Naive thymus-derived CD4-positive, alpha-beta T cell (primary cell): ENCODE measurements at regions of chr17 and their contacts with region 1.

Region 1: GRCh38 chr17:40317880-40318829 is 9.2 kb downstream of the RARA start:
- DNase-seq: peak; percentile 81 to 91 (median 90)
- ATAC-seq: peak; percentile 76
- H3K4me3 ChIP-seq: peak overlapping the region; percentile 55
- H3K4me3 Mint-ChIP-seq: peak overlapping the region; percentile 89 to 98 (median 97)
- H3K27ac ChIP-seq: peak overlapping the region; percentile 96
- H3K27ac Mint-ChIP-seq: peak overlapping the region; percentile 98 to 100 (median 99)
- H3K4me1 ChIP-seq: peaks cover 49 to 68% of the 10 kb centered on the region in 2 donors
- H3K4me1 Mint-ChIP-seq: peaks cover 32 to 88% (median 74%) of the 10 kb centered on the region in 7 donors
- H3K27me3 ChIP-seq: no peaks in the 10 kb centered on the region
- H3K27me3 Mint-ChIP-seq: peaks cover 0 to 8% (median 0%) of the 10 kb centered on the region in 5 donors

Region 2: GRCh38 chr17:40287494-40288369 is 30.4 kb before region 1 on chr17 and contains the start of gene CDC6:
- CTCF ChIA-PET with region 1: no interaction called
- POLR2A ChIA-PET with region 1: no interaction called
- intact Hi-C with region 1: loop called (anchors 1 kb)
- DNase-seq: peak; percentile 90 to 99 (median 98)
- ATAC-seq: peak; percentile 97
- H3K4me3 ChIP-seq: peak within 1 kb of the TSS; percentile 70
- H3K4me3 Mint-ChIP-seq: peak within 1 kb of the TSS; percentile 93 to 99 (median 96)
- H3K27ac ChIP-seq: peak within 1 kb of the TSS; percentile 63
- H3K27ac Mint-ChIP-seq: peak within 1 kb of the TSS; percentile 84 to 98 (median 91)
- H3K4me1 ChIP-seq: peaks cover 3 to 11% of the 10 kb centered on the region in 2 donors
- H3K4me1 Mint-ChIP-seq: peaks cover 8 to 41% (median 22%) of the 10 kb centered on the region in 7 donors
- H3K27me3 ChIP-seq: no peaks in the 10 kb centered on the region
- H3K27me3 Mint-ChIP-seq: no peaks in the 10 kb centered on the region
- total RNA-seq, gene CDC6: 0.51 to 73.6 (median 0.85) TPM

Region 3: GRCh38 chr17:40355123-40355803 is 37.1 kb after region 1 on chr17:
- CTCF ChIA-PET with region 1: interaction called, 87 read pairs
- POLR2A ChIA-PET with region 1: interaction called, 9 read pairs
- intact Hi-C with region 1: loop called in 1 of 2 experiments (anchors 1 kb)
- DNase-seq: peak; percentile 63 to 93 (median 78)
- ATAC-seq: peak; percentile 86
- H3K4me3 ChIP-seq: no peak overlapping the region
- H3K4me3 Mint-ChIP-seq: peak overlapping the region in 1 of 10 donors; percentile 32
- H3K27ac ChIP-seq: no peak overlapping the region
- H3K27ac Mint-ChIP-seq: peak overlapping the region in 5 of 9 donors; percentile 6 to 69 (median 32)
- H3K4me1 ChIP-seq: no peaks in the 10 kb centered on the region
- H3K4me1 Mint-ChIP-seq: peaks cover 8 to 25% (median 18%) of the 10 kb centered on the region in 7 donors
- H3K27me3 ChIP-seq: no peaks in the 10 kb centered on the region
- H3K27me3 Mint-ChIP-seq: peaks cover 0 to 5% (median 0%) of the 10 kb centered on the region in 5 donors

Region 4: DNA sequence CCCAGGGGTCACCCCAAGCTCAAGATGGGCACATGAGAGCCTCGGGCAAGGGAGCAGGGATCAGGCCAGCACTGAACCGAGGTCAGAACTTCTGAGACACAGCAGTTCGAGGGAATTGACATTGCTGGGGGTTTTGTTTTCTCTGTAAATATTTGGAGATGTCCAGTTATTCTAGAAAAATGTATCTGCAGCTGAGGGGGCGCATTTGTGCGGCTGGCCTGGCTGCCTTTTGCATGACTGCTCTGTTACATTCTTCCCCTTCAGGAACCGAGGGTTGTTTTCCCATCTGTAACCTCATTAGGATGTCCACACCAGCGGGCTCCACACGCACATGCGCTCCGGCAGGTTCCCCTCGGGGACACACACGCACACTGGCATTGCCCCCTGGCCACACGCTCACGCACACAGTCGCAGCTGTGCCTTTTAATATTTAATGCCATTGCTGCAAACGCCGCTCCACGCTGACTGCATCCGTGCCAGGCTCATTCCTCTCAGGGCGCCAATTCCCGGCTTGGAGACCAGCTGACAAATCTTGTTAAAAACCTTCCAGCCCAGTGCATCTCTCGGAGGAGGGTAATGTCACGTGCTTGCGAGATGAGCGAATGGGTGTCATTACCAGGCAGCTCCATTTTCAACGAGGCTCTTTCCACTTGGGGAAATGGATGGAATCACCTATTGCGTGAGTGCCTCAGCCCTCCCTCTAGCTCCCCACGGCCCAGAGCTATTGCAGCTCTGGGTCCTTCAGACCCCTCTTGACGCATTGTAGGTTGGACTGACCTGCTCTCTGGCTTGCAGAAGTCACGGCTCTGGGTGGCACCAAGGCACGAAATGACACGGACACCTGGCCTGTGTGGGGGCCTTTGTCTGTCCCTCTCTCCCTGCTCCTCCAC is 234.0 kb after region 1 on chr17:
- CTCF ChIA-PET with region 1: no interaction called
- POLR2A ChIA-PET with region 1: interaction called, 4 read pairs
- intact Hi-C with region 1: loop called in 1 of 2 experiments (anchors 5 kb)
- DNase-seq: peak in 2 of 9 donors; percentile 33 to 43
- ATAC-seq: peak; percentile 2
- H3K4me3 ChIP-seq: no peak overlapping the region
- H3K4me3 Mint-ChIP-seq: peak overlapping the region in 9 of 10 donors; percentile 4 to 100 (median 58)
- H3K27ac ChIP-seq: peak overlapping the region; percentile 79
- H3K27ac Mint-ChIP-seq: peak overlapping the region; percentile 76 to 100 (median 99)
- H3K4me1 ChIP-seq: peaks cover 52 to 93% of the 10 kb centered on the region in 2 donors
- H3K4me1 Mint-ChIP-seq: peaks cover 59 to 100% (median 98%) of the 10 kb centered on the region in 7 donors
- H3K27me3 ChIP-seq: no peaks in the 10 kb centered on the region
- H3K27me3 Mint-ChIP-seq: no peaks in the 10 kb centered on the region

Region 5: GRCh38 chr17:40608061-40608588 is 290.0 kb after region 1 on chr17:
- CTCF ChIA-PET with region 1: interaction called, 3 read pairs
- POLR2A ChIA-PET with region 1: interaction called, 3 read pairs
- intact Hi-C with region 1: loop called (anchors 2 kb)
- DNase-seq: peak in 8 of 9 donors; percentile 39 to 90 (median 85)
- ATAC-seq: peak; percentile 80
- H3K4me3 ChIP-seq: peak overlapping the region; percentile 62
- H3K4me3 Mint-ChIP-seq: peak overlapping the region; percentile 64 to 88 (median 78)
- H3K27ac ChIP-seq: peak overlapping the region; percentile 94
- H3K27ac Mint-ChIP-seq: peak overlapping the region; percentile 90 to 100 (median 99)
- H3K4me1 ChIP-seq: peaks cover 83 to 98% of the 10 kb centered on the region in 2 donors
- H3K4me1 Mint-ChIP-seq: peaks cover 43 to 100% (median 94%) of the 10 kb centered on the region in 7 donors
- H3K27me3 ChIP-seq: no peaks in the 10 kb centered on the region
- H3K27me3 Mint-ChIP-seq: no peaks in the 10 kb centered on the region